HCT116 (cell line): ENCODE measurements at regions of chr15 and their contacts with region 1.

Region 1: GRCh38 chr15:57527382-57528091 is 64.2 kb upstream of the MYZAP start:
- DNase-seq: peak; percentile 61
- ATAC-seq: peak; percentile 88
- H3K4me3 ChIP-seq: no peak overlapping the region
- H3K27ac ChIP-seq: no peak overlapping the region
- H3K4me1 ChIP-seq: peaks cover 0 to 3% of the 10 kb centered on the region in 2 experiments; a peak in 1 of 4 replicates
- H3K27me3 ChIP-seq: no peaks in the 10 kb centered on the region
- CTCF ChIP-seq: peak; percentile 41 to 79 (median 70)
- POLR2A ChIP-seq: no peak
- RAD21 ChIP-seq: peak; percentile 87

Region 2: DNA sequence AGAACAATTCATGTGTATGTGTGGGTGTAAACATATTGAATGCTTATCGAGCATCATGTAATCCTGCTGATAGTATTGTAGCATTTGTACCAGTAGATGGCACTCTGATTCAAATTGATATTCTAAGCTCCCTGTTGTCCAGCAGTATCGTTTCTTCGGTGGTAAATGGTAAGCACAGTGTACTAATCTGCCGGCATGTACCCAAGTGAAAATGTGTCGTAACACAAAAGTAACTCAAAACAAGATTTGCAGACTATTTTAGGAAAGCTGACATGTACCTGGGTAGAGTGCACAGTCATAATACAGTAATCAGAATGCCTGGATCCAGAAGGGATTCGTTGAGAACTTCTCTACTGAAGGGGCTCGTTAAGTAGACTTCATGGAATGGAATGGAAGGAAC is 1030.9 kb before region 1 on chr15:
- CTCF ChIA-PET with region 1: interaction called, 11 read pairs
- POLR2A ChIA-PET with region 1: no interaction called
- RAD21 ChIA-PET with region 1: no interaction called
- intact Hi-C with region 1: loop called (anchors 1 kb)
- DNase-seq: peak; percentile 67
- ATAC-seq: peak; percentile 98
- H3K4me3 ChIP-seq: no peak overlapping the region
- H3K27ac ChIP-seq: no peak overlapping the region
- H3K4me1 ChIP-seq: peaks cover 0 to 5% of the 10 kb centered on the region in 2 experiments; a peak in 1 of 4 replicates
- H3K27me3 ChIP-seq: no peaks in the 10 kb centered on the region
- CTCF ChIP-seq: peak; percentile 52 to 75 (median 63); a peak in 5 of 6 replicates
- POLR2A ChIP-seq: no peak
- RAD21 ChIP-seq: peak; percentile 81

Region 3: DNA sequence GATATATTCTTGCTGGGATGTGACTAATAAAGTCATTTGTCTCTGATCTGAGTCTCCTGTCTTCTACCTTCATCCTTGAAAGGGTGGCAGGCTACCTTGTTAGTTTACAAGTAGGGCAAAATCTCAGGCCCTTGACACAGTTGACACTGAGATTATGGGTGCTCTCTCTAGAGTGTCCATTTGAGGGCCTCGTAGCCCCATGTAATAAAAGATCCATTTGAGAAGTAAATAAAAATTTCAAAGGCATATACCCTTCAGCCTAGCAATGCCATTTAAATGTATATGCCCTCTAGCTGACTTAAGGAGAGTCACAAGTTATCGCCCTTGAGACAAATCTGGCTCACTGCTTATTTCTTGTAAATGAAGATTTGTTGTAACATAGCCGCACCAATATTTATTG is 510.5 kb before region 1 on chr15:
- CTCF ChIA-PET with region 1: no interaction called
- POLR2A ChIA-PET with region 1: no interaction called
- RAD21 ChIA-PET with region 1: no interaction called
- intact Hi-C with region 1: loop called (anchors 2 kb)
- DNase-seq: no peak
- ATAC-seq: peak; percentile 38
- H3K4me3 ChIP-seq: no peak overlapping the region
- H3K27ac ChIP-seq: no peak overlapping the region
- H3K4me1 ChIP-seq: peaks cover 3 to 27% of the 10 kb centered on the region in 2 experiments; a peak in 3 of 4 replicates
- H3K27me3 ChIP-seq: no peaks in the 10 kb centered on the region
- CTCF ChIP-seq: peak in 2 of 3 experiments; percentile 16 to 30; a peak in 1 of 6 replicates
- POLR2A ChIP-seq: no peak
- RAD21 ChIP-seq: peak; percentile 24; the same call in 1 of the 2 replicates

Region 4: GRCh38 chr15:57340682-57341259 is 186.8 kb before region 1 on chr15:
- CTCF ChIA-PET with region 1: interaction called, 338 read pairs
- POLR2A ChIA-PET with region 1: interaction called, 12 read pairs
- RAD21 ChIA-PET with region 1: interaction called, 43 to 57 read pairs
- intact Hi-C with region 1: loop called (anchors 1 kb)
- DNase-seq: peak; percentile 56
- ATAC-seq: peak; percentile 91
- H3K4me3 ChIP-seq: no peak overlapping the region
- H3K27ac ChIP-seq: no peak overlapping the region
- H3K4me1 ChIP-seq: no peaks in the 10 kb centered on the region
- H3K27me3 ChIP-seq: no peaks in the 10 kb centered on the region
- CTCF ChIP-seq: peak; percentile 75 to 92 (median 90)
- POLR2A ChIP-seq: no peak
- RAD21 ChIP-seq: peak; percentile 94

Region 5: GRCh38 chr15:57541805-57542504 is 14.4 kb after region 1 on chr15:
- CTCF ChIA-PET with region 1: interaction called, 18 read pairs
- POLR2A ChIA-PET with region 1: no interaction called
- RAD21 ChIA-PET with region 1: interaction called in 1 of 2 experiments, 3 read pairs
- intact Hi-C with region 1: no loop called
- DNase-seq: peak; percentile 45
- ATAC-seq: peak; percentile 86
- H3K4me3 ChIP-seq: no peak overlapping the region
- H3K27ac ChIP-seq: no peak overlapping the region
- H3K4me1 ChIP-seq: peaks cover 3 to 6% of the 10 kb centered on the region in 2 experiments; a peak in 3 of 4 replicates
- H3K27me3 ChIP-seq: no peaks in the 10 kb centered on the region
- CTCF ChIP-seq: peak; percentile 61 to 89 (median 86); a peak in 5 of 6 replicates
- POLR2A ChIP-seq: no peak
- RAD21 ChIP-seq: peak; percentile 69